ENCODE measurements at regions of chr15 and their contacts with region 1.

Region 1: GRCh38 chr15:90886041-90886614 is 1.8 kb downstream of the FES start:
- DNase-seq: peak; percentile 89
- H3K4me3 ChIP-seq: peak overlapping the region in 1 of 4 donors; percentile 71
- H3K27ac ChIP-seq: peak overlapping the region; percentile 87 to 92 (median 90)
- H3K4me1 ChIP-seq: peaks cover 0 to 41% (median 35%) of the 10 kb centered on the region in 4 donors
- H3K27me3 ChIP-seq: no peaks in the 10 kb centered on the region
- CTCF ChIP-seq: peak; percentile 95 to 98 (median 96)
- EP300 ChIP-seq: no peak
- POLR2A ChIP-seq: no peak

Region 2: DNA sequence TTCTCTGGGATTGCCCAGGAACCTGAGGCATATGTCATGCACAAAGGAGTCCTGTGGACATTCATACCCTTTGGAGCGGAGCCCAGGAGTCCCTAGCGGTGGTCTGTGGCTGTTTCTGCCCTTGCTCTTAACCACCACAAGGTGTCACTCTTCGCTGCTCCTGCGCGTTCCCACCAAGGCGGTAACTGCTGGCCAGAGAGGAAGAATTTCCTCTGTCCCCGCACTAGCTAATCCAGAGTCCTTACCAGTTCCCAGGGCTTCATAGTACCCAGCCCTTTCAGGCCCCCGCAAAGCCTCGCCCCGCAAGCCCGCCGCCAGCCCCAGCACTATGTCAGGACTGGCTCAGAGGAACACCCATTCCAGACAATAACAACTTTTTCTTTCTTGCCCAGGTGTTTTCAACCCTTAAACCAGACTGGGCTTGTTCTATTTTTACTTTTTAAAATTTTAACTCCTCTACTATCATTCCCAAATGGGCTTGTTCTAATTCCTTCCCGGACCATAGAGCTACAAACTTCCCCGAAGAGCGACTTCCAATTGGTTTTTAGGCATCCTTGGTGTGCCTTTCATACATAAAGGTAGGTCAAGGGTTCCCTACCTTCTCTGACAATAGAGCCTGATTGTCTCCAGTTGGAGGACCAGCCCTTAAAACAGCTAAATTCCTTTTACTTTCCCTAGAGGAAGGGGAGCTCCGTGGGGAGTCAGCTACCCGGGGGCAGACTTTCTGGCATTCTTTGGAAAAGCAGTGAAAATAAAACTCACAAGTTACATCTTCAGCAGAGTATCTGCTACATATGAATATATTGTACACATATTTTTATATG is 565.9 kb before region 1 on chr15:
- intact Hi-C with region 1: loop called (anchors 10 kb)
- DNase-seq: peak; percentile 93
- H3K4me3 ChIP-seq: peak overlapping the region in 1 of 4 donors; percentile 11
- H3K27ac ChIP-seq: peak overlapping the region; percentile 28 to 50 (median 36)
- H3K4me1 ChIP-seq: peaks cover 0 to 42% (median 32%) of the 10 kb centered on the region in 4 donors
- H3K27me3 ChIP-seq: no peaks in the 10 kb centered on the region
- CTCF ChIP-seq: peak; percentile 95 to 100 (median 99)
- EP300 ChIP-seq: no peak
- POLR2A ChIP-seq: no peak

Region 3: DNA sequence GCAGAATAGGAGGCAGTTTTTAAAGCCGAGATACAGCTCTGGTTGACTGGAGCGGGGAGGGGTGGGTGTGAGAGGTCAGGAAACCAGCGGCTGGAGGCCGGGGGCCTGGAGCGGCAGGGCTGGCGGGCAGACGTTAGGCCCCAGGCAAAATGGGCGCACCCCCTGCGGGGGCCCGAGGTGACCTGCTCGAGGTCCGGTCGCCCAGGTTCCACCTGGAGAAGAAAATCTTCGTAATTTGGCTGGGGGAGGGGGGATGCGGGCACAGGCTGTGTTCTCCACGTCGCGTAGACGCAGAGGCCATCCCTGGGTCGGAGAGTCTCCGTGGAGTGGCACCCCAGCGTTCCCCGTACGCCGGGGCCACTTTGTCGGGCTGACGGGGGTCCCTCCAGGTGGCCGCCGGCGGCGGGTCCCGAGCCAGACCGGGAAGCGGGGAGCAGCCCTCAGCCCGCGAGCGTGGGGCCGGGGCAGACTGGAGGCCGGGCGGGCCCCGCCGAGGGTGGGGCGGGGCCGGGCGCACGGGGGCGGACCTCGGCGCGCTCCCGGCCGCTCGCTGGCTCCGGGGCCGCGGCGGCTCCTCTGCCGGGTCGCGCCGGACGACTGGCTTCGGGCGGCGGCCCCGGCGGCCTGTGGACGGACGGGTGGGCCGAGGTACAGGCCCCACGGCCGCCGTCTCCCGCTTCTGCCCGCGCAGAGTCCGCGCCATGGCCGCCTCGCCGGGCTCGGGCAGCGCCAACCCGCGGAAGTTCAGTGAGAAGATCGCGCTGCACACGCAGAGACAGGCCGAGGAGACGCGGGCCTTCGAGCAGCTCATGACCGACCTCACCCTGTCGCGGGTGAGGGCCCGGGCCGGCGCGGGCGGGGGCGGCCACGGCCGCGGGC is 356.5 kb before region 1 on chr15 and contains the start of gene CRTC3:
- intact Hi-C with region 1: loop called (anchors 10 kb)
- DNase-seq: peak; percentile 72
- H3K4me3 ChIP-seq: peak within 1 kb of the TSS; percentile 73 to 83 (median 78)
- H3K27ac ChIP-seq: peak within 1 kb of the TSS; percentile 94 to 99 (median 96)
- H3K4me1 ChIP-seq: peaks cover 0 to 40% (median 36%) of the 10 kb centered on the region in 4 donors
- H3K27me3 ChIP-seq: no peaks in the 10 kb centered on the region
- CTCF ChIP-seq: no peak
- EP300 ChIP-seq: no peak
- POLR2A ChIP-seq: no peak
- total RNA-seq, gene CRTC3: 27.6 to 64.0 (median 35.7) TPM

Region 4: DNA sequence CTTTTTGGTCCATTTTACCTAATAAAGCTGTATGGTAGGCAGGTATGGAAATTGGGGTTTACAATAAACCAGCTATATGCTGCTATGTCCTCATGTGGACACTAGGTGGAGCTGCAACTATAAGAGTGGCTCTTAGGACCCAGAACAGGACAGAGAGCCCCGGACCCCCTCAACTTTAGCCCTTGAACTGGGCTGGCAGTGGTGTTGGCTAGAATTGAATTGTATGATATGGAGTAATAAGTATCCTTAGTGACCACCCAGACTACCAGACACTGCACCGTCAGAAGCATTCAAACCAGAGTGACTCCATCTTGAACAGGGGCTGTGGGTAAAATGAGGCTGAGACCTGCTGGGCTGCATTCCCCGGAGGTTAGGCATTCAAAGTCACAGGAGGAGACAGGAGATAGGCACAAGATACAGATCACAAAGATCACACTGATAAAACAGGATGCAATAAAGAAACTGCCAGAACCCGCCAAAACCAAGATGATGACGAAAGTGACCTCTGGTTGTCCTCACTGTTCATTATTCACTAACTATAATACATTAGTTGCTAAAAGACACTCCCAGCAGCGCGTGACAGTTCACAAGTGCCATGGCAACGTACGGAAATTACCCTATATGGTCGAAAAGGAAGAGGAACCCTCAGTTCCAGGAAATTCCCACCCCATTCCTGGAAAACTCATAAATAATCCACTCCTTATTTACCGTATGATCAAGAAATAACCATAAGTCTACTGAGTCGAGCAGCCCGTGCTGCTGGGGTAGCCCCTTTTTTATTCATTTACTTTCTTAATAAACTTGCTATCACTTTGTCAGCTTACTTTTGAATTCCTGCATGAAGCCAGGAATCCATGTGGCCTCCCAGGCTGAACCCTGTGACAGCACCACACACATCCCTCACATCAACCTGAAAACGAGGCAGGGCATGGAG is 237.7 kb before region 1 on chr15:
- intact Hi-C with region 1: loop called (anchors 1 kb)
- DNase-seq: peak; percentile 93
- H3K4me3 ChIP-seq: no peak overlapping the region
- H3K27ac ChIP-seq: peak overlapping the region; percentile 36 to 65 (median 58)
- H3K4me1 ChIP-seq: peaks cover 0 to 9% (median 4%) of the 10 kb centered on the region in 4 donors
- H3K27me3 ChIP-seq: no peaks in the 10 kb centered on the region
- CTCF ChIP-seq: peak; percentile 81 to 92 (median 90)
- EP300 ChIP-seq: peak in 2 of 4 donors; percentile 45 to 80
- POLR2A ChIP-seq: no peak

Region 5: GRCh38 chr15:90716976-90717821 is 168.9 kb before region 1 on chr15 and contains the start of gene BLM:
- intact Hi-C with region 1: loop called (anchors 2 kb)
- DNase-seq: peak; percentile 98
- H3K4me3 ChIP-seq: peak within 1 kb of the TSS; percentile 53 to 59 (median 57)
- H3K27ac ChIP-seq: peak within 1 kb of the TSS; percentile 83 to 90 (median 86)
- H3K4me1 ChIP-seq: peaks cover 0 to 14% (median 7%) of the 10 kb centered on the region in 4 donors
- H3K27me3 ChIP-seq: no peaks in the 10 kb centered on the region
- CTCF ChIP-seq: peak; percentile 36 to 77 (median 53)
- EP300 ChIP-seq: no peak
- POLR2A ChIP-seq: peak in 1 of 2 donors; percentile 15
- total RNA-seq, gene BLM: 0.54 to 0.99 (median 0.71) TPM in 3 of 4 donors, not detected in the other

Region 6: GRCh38 chr15:90956594-90957030 is 70.5 kb after region 1 on chr15:
- intact Hi-C with region 1: no loop called
- DNase-seq: peak; percentile 87
- H3K4me3 ChIP-seq: peak overlapping the region; percentile 50 to 77 (median 62)
- H3K27ac ChIP-seq: peak overlapping the region; percentile 78 to 86 (median 81)
- H3K4me1 ChIP-seq: peaks cover 0 to 56% (median 49%) of the 10 kb centered on the region in 4 donors
- H3K27me3 ChIP-seq: no peaks in the 10 kb centered on the region
- CTCF ChIP-seq: peak; percentile 71 to 99 (median 82)
- EP300 ChIP-seq: no peak
- POLR2A ChIP-seq: no peak

Measured in sigmoid colon (tissue), 7 donors.